GM23248 (cell line): ENCODE measurements at regions of chr1 and their contacts with region 1.

Region 1: DNA sequence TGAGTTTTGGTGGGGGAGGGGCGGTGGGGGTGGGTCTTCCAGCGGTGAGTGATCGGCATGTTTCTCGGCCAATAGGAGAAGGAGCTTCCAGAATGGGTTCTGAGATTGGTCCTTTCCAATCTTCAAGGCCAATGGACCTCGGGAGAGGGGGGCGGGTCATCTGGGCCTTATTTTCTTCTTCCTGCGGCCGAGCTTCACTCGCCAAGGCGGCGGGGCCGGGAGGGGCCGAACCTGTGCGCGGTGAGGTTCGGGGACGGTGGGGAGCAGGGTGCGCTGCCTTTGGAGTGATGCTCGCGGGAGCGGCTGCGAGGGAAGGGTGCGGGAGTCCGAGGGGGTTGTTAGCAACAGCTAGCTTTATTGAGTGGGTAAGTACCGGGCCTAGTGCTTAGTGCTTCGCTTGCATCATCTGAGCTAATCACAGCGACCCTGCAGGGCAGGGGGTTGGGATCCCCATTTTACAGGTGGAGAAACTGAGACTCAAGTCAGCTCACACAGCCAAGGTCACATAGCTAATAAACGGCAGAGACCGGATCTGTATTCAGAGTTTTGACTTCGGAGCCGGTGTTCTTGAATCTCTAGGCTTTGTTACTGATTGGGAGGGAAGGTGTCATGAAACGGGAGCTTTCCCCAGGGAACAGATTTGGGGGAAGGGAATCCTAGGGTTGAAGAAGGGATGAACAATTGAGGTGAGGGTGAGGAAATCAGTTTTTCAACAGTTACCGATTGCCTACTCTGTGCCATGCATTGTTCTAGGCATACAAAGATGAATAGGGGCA is 549 bp downstream of the KDM4A start:
- DNase-seq: peak; percentile 97
- H3K4me3 ChIP-seq: peak overlapping the region; percentile 97
- H3K27ac ChIP-seq: peak overlapping the region; percentile 75
- H3K4me1 ChIP-seq: peaks cover 11% of the 10 kb centered on the region; the same call in 1 of the 2 replicates
- H3K27me3 ChIP-seq: no peaks in the 10 kb centered on the region

Region 2: GRCh38 chr1:43227143-43227764 is 423.2 kb before region 1 on chr1:
- in situ Hi-C with region 1: loop called (anchors 25 kb)
- DNase-seq: peak; percentile 68
- H3K4me3 ChIP-seq: no peak overlapping the region
- H3K27ac ChIP-seq: no peak overlapping the region
- H3K4me1 ChIP-seq: peaks cover 7% of the 10 kb centered on the region
- H3K27me3 ChIP-seq: no peaks in the 10 kb centered on the region

Region 3: DNA sequence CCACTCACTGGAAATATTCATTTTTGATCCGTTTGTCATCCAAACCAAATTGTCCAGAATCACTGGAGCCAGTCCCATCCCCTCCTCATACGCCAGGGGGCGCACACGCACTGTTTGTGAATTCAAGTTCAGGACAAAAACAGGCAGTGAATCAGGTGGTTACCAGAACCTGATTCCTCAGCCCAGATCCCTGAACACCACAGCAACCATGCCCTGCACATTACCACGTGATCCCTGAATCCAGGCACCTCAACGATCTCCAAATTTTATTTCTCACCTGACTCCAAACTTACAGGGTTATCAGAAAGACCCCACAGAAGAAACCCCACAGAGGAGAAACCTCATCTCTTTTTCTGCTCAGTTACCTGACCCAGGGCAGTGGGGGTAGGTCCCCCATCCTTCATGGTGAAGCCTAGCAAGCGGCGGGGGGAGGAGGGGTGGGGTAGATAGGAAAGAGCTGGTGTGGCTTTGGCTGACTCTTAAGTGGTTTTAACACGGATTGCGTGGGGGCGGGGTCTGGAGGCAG is 121.2 kb before region 1 on chr1:
- in situ Hi-C with region 1: loop called (anchors 10 kb)
- DNase-seq: peak; percentile 90
- H3K4me3 ChIP-seq: no peak overlapping the region
- H3K27ac ChIP-seq: no peak overlapping the region
- H3K4me1 ChIP-seq: peaks cover 4% of the 10 kb centered on the region; the same call in 1 of the 2 replicates
- H3K27me3 ChIP-seq: no peaks in the 10 kb centered on the region

Region 4: DNA sequence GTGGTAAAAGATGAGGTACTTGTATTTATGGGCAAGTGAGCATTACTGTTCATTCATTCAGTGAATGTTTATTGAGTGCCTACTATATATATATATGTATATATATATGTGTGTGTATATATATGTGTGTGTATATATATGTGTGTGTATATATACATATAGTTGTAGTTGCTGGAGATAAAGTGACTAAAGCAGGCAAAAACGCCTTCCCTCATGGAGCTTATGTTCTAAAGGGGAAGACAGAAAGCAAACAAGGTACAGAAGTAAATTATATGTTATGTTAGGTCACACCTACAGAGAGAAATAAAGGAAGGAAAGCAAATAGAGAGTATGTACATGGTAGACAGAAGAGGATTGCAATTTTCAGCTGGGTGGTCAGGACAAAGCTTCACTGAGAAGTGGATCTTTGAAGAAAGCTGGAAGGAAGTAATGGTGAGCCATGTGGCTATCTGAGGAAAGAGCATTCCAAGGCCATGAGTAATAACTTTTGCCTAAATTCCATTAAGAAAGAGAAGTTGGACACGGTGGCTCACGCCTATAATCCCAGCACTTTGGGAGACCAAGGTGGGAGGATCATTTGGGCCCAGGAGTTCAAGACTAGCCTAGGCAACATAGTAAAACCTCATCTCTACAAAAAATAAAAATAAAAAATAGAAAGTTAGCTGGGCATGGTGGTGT is 434.6 kb after region 1 on chr1:
- in situ Hi-C with region 1: no loop called
- DNase-seq: peak; percentile 83
- H3K4me3 ChIP-seq: no peak overlapping the region
- H3K27ac ChIP-seq: peak overlapping the region; percentile 40
- H3K4me1 ChIP-seq: peaks cover 10% of the 10 kb centered on the region
- H3K27me3 ChIP-seq: no peaks in the 10 kb centered on the region